ENCODE measurements at regions of chrX and their contacts with region 1.

Region 1: DNA sequence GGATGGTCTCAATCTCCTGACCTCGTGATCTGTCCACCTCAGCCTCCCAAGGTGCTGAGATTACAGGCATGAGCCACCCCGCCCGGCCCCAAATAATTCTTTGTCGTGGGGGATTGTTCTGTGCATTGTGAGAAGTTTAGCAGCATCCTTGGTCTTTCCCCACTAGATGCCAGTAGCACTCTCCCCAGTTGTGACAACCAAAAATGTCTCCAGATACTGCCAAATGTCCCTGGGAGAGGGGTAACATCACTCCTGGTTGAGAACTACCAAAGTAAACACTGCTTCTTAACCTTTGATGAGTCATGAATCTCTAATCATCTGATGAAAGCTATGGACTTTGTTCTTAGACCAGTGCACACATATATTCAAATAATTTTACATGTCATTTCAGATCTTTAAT is 90.7 kb upstream of the BRS3 start:
- DNase-seq: no peak
- H3K4me3 ChIP-seq: no peak overlapping the region
- H3K27ac ChIP-seq: no peak overlapping the region
- H3K4me1 ChIP-seq: peaks cover 9% of the 10 kb centered on the region
- H3K27me3 ChIP-seq: no peaks in the 10 kb centered on the region
- CTCF ChIP-seq: peak in 1 of 2 donors; percentile 23

Region 2: GRCh38 chrX:136322064-136322463 is 74.9 kb before region 1 on chrX:
- CTCF ChIA-PET with region 1: no interaction called
- dilution Hi-C with region 1: no loop called
- in situ Hi-C with region 1: no loop called
- intact Hi-C with region 1: no loop called
- DNase-seq: no peak
- H3K4me3 ChIP-seq: no peak overlapping the region
- H3K27ac ChIP-seq: no peak overlapping the region
- H3K4me1 ChIP-seq: peaks cover 13% of the 10 kb centered on the region
- H3K27me3 ChIP-seq: no peaks in the 10 kb centered on the region
- CTCF ChIP-seq: no peak

Region 3: GRCh38 chrX:136577552-136577951 is 180.6 kb after region 1 on chrX:
- CTCF ChIA-PET with region 1: no interaction called
- dilution Hi-C with region 1: no loop called
- in situ Hi-C with region 1: no loop called
- intact Hi-C with region 1: loop called (anchors 5 kb)
- DNase-seq: peak; percentile 37
- H3K4me3 ChIP-seq: no peak overlapping the region
- H3K27ac ChIP-seq: no peak overlapping the region
- H3K4me1 ChIP-seq: no peaks in the 10 kb centered on the region
- H3K27me3 ChIP-seq: no peaks in the 10 kb centered on the region
- CTCF ChIP-seq: peak; percentile 68 to 79